Activated naive CD4-positive, alpha-beta T cell treated with anti-CD3 and anti-CD28 coated beads, Interleukin-2, amount 10 ng/mL, durations not matched to agents 7 days and 5 days (primary cell): ENCODE measurements at regions of chr19 and their contacts with region 1.

Region 1: GRCh38 chr19:4633140-4633967 is 6.0 kb upstream of the TNFAIP8L1 start:
- DNase-seq: peak; percentile 63
- H3K4me3 Mint-ChIP-seq: no peak overlapping the region
- H3K27ac Mint-ChIP-seq: no peak overlapping the region
- H3K4me1 Mint-ChIP-seq: peaks cover 26% of the 10 kb centered on the region
- H3K27me3 Mint-ChIP-seq: peaks cover 29% of the 10 kb centered on the region

Region 2: GRCh38 chr19:4567584-4568071 is 65.7 kb before region 1 on chr19:
- CTCF ChIA-PET with region 1: interaction called, 61 read pairs
- DNase-seq: peak; percentile 79
- H3K4me3 Mint-ChIP-seq: no peak overlapping the region
- H3K27ac Mint-ChIP-seq: no peak overlapping the region
- H3K4me1 Mint-ChIP-seq: no peaks in the 10 kb centered on the region
- H3K27me3 Mint-ChIP-seq: peaks cover 17% of the 10 kb centered on the region